PC-9 (cell line): ENCODE measurements at regions of chr22 and their contacts with region 1.

Region 1: DNA sequence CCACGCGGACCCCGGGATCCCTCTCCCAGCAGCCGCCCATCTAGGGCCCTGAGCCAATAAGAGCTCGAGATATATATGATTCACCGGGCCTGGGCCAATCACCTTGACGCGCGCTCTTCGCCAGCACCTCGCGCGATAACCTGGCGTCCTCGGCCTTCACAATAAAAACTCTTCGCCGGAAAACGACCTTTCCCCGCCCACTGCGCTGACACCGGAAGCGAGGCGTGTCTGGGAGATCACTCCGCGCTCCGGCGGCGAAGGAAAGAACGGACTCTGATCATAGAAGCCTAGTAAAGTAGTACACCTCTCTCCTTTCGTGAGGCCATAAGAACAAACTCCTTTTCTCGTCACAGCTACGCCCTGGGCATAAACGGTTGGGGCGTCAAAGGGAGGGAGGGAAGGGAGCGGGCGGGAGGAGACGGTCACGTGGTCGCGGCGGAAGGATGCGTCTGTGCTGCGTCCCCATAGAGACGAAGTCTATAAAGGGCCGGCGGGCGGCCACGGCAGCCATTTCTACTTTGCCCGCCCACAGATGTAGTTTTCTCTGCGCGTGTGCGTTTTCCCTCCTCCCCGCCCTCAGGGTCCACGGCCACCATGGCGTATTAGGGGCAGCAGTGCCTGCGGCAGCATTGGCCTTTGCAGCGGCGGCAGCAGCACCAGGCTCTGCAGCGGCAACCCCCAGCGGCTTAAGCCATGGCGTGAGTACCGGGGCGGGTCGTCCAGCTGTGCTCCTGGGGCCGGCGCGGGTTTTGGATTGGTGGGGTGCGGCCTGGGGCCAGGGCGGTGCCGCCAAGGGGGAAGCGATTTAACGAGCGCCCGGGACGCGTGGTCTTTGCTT is at the start of gene ATF4:
- DNase-seq: peak; percentile 98
- H3K4me3 ChIP-seq: peak within 1 kb of the TSS; percentile 97
- H3K27ac ChIP-seq: peak within 1 kb of the TSS; percentile 93
- H3K4me1 ChIP-seq: peaks cover 31% of the 10 kb centered on the region
- H3K27me3 ChIP-seq: no peaks in the 10 kb centered on the region
- CTCF ChIP-seq: no peak
- total RNA-seq, gene ATF4: 488 and 588 TPM in 2 replicates

Region 2: GRCh38 chr22:39152511-39153219 is 367.6 kb before region 1 on chr22 and contains the start of gene CBX7:
- CTCF ChIA-PET with region 1: no interaction called
- POLR2A ChIA-PET with region 1: interaction called, 3 read pairs
- intact Hi-C with region 1: loop called (anchors 5 kb)
- DNase-seq: peak; percentile 79 to 94
- H3K4me3 ChIP-seq: peak within 1 kb of the TSS; percentile 77
- H3K27ac ChIP-seq: no peak within 1 kb of the TSS
- H3K4me1 ChIP-seq: peaks cover 16% of the 10 kb centered on the region
- H3K27me3 ChIP-seq: no peaks in the 10 kb centered on the region
- CTCF ChIP-seq: no peak
- total RNA-seq, gene CBX7: 28.2 and 29.1 TPM in 2 replicates

Region 3: DNA sequence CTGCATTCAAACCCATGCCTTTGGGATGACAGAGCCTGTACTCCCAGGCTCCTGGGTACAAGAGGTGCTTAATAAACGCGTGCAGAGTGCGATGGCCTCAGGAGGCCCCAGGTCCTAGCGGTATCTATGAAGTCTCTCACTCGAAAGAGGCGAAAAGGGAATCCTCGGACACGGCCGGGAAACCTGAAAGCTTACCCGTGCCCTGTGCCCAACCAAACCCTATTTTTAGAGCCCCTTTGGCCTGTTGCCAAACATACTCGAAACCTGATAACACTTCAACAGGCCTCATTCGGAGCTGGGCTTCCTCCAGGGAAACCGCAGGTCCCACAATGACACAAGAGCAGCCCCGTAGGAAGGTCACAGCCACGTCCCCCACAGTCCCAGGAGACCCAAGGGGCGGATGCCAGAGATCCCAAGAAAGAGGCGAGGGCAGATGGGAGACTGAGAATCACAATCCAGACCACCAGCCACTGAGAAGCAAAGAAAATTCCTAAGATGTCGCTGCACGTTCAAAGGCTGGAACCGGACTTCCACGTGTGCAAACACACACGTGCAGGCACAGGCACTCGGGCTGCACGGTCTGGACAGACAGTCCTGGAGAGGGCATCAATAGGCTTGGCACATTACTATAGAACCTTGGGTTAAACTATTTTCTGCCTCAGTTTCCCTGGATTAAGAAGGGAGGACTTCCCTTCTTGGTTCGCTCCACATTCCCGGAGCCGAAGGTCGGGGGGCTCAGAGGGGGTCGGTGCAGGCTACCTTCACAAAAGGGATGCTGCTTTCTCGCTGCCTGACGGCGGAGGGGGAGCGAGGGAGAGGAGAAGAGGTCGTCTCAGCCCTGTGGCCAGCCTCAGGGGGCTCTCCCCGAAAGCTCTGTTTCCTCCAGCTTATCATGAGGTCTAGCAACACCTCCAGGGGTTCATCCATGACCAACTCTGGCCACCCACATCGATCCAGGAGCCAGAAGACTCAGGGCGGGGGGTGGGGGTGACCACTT is 283.7 kb before region 1 on chr22:
- CTCF ChIA-PET with region 1: no interaction called
- POLR2A ChIA-PET with region 1: no interaction called
- intact Hi-C with region 1: loop called (anchors 10 kb)
- DNase-seq: no peak
- H3K4me3 ChIP-seq: no peak overlapping the region
- H3K27ac ChIP-seq: no peak overlapping the region
- H3K4me1 ChIP-seq: peaks cover 49% of the 10 kb centered on the region
- H3K27me3 ChIP-seq: no peaks in the 10 kb centered on the region
- CTCF ChIP-seq: no peak

Region 4: GRCh38 chr22:39325392-39325932 is 194.8 kb before region 1 on chr22:
- CTCF ChIA-PET with region 1: no interaction called
- POLR2A ChIA-PET with region 1: no interaction called
- intact Hi-C with region 1: no loop called
- DNase-seq: peak in 1 of 2 experiments; percentile 55
- H3K4me3 ChIP-seq: no peak overlapping the region
- H3K27ac ChIP-seq: no peak overlapping the region
- H3K4me1 ChIP-seq: peaks cover 6% of the 10 kb centered on the region
- H3K27me3 ChIP-seq: no peaks in the 10 kb centered on the region
- CTCF ChIP-seq: no peak

Region 5: DNA sequence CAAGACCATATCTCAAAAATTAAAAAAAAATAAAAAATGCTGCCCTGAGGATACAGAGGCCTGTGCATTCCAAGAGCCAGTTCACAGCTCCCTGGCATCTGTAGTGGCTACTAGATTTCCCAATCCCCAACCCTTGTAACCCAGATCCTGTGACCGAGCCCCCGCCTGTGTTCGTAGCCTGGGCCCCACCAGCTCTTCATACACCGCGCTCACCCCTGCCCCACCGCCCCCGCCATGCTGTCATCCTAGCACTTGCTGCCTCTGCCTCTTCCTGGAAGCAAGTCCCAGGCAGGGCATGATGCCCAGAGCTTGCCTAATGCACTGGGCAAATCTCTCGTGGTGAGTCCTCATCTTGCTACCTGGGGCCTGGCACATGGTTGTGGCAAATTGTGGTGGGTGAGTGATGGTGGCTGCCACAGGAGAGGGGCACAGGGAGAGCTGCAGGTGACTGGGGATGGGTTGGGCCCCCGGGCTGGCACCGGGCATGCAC is 56.3 kb before region 1 on chr22:
- CTCF ChIA-PET with region 1: interaction called, 16 read pairs
- POLR2A ChIA-PET with region 1: interaction called, 15 read pairs
- intact Hi-C with region 1: no loop called
- DNase-seq: peak; percentile 49 to 77
- H3K4me3 ChIP-seq: no peak overlapping the region
- H3K27ac ChIP-seq: no peak overlapping the region
- H3K4me1 ChIP-seq: peaks cover 4% of the 10 kb centered on the region; the same call in 1 of the 2 replicates
- H3K27me3 ChIP-seq: peaks cover 6% of the 10 kb centered on the region; the same call in 1 of the 2 replicates
- CTCF ChIP-seq: no peak

Region 6: DNA sequence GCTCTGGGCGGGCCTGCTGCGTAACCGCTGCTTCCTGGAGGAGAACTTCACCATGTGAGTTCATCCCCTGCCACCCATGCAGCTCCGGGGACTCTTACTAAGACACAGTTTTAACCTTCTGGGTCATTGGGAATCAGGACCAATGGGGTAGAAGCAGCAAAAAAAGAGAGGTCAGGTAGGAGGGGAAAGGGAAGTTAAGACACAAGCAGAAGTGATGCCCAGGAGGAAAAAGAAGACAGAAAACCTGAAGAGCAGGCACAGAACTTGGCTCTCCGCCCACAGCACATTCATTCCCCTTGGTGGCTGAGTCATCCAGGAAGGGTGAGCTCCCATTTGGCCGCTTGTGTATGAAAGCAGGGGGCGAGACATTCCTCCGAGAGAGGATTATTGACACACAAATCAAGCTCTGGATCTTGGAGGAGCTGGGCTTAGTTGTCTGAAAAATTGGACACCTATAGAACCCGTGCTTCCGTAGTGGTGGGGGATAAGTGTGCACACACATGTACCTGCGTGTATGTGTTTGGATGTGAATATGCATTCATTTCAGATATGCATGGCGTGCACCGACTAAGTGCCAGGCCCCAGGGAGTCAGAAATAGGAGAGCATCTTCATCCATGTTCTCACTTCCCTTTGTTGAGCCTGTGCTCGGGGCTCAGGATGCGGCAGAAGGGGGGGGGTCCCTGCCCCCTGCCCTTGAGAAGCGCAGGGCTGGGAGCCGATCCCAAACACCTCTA is 114.6 kb after region 1 on chr22:
- CTCF ChIA-PET with region 1: no interaction called
- POLR2A ChIA-PET with region 1: no interaction called
- intact Hi-C with region 1: no loop called
- DNase-seq: peak; percentile 95 to 99
- H3K4me3 ChIP-seq: peak overlapping the region; percentile 39; the same call in 1 of the 2 replicates
- H3K27ac ChIP-seq: peak overlapping the region; percentile 55
- H3K4me1 ChIP-seq: peaks cover 54% of the 10 kb centered on the region
- H3K27me3 ChIP-seq: no peaks in the 10 kb centered on the region
- CTCF ChIP-seq: no peak

Region 7: GRCh38 chr22:39661842-39662676 is 141.8 kb after region 1 on chr22:
- CTCF ChIA-PET with region 1: no interaction called
- POLR2A ChIA-PET with region 1: no interaction called
- intact Hi-C with region 1: no loop called
- DNase-seq: peak in 1 of 2 experiments; percentile 60
- H3K4me3 ChIP-seq: no peak overlapping the region
- H3K27ac ChIP-seq: no peak overlapping the region
- H3K4me1 ChIP-seq: peaks cover 35% of the 10 kb centered on the region
- H3K27me3 ChIP-seq: no peaks in the 10 kb centered on the region
- CTCF ChIP-seq: no peak

Region 8: GRCh38 chr22:39723899-39724351 is 203.7 kb after region 1 on chr22:
- CTCF ChIA-PET with region 1: no interaction called
- POLR2A ChIA-PET with region 1: no interaction called
- intact Hi-C with region 1: no loop called
- DNase-seq: peak; percentile 35 to 52
- H3K4me3 ChIP-seq: no peak overlapping the region
- H3K27ac ChIP-seq: no peak overlapping the region
- H3K4me1 ChIP-seq: no peaks in the 10 kb centered on the region
- H3K27me3 ChIP-seq: peaks cover 62% of the 10 kb centered on the region
- CTCF ChIP-seq: no peak